GM13976 (cell line): ENCODE measurements at regions of chr17 and their contacts with region 1.

Region 1: GRCh38 chr17:48030531-48030930 is 7.1 kb downstream of the COPZ2 start:
- DNase-seq: no peak
- CTCF ChIP-seq: no peak

Region 2: GRCh38 chr17:47970704-47971463 is 59.6 kb before region 1 on chr17 and contains the start of gene CDK5RAP3:
- in situ Hi-C with region 1: no loop called
- DNase-seq: peak; percentile 99
- CTCF ChIP-seq: peak; percentile 89

Region 3: GRCh38 chr17:48068491-48068961 is 38.0 kb after region 1 on chr17:
- in situ Hi-C with region 1: loop called (anchors 5 kb)
- DNase-seq: no peak
- CTCF ChIP-seq: no peak